CD8-positive, alpha-beta T cell (primary cell): ENCODE measurements at regions of chr7 and their contacts with region 1.

Region 1: DNA sequence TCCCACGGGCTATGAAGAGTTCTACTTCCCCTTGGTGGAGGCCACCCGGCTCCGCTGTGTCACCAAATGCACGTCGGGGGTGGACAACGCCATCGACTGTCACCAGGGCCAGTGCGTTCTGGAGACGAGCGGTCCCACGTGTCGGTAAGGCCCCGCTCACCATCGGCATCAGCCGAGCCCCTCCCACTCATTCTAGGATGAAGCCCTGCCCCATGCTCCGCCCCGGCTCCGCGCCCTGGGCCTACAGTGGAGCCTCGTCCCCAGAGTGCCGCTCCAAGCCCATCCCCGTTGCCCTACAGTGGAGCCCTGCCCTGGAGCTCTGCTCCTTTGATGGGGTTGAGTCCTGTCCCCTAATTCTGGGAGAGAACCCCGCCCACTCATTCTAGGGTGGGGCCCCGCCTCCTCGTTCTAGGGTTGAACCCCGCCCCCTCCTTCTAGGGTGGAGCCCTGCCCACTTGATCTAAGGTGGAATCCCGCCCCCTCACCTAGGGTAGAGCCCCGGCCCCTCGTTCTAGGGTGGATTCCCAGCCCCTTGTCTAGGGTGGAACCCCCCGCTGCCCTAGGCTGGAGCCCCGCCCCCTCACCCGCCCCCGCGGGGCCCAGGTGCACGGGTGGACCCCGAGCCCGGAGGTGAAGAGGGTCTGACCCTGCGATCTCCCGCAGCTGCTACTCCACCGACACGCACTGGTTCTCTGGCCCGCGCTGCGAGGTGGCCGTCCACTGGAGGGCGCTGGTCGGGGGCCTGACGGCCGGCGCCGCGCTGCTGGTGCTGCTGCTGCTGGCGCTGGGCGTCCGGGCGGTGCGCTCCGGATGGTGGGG is 3.4 kb upstream of the MUC12 start:
- DNase-seq: peak; percentile 57 to 84 (median 71)
- ATAC-seq: peak; percentile 84
- H3K4me3 ChIP-seq: peak overlapping the region; percentile 35 to 71
- H3K4me3 Mint-ChIP-seq: peak overlapping the region; percentile 81
- H3K27ac ChIP-seq: no peak overlapping the region
- H3K27ac Mint-ChIP-seq: no peak overlapping the region
- H3K4me1 ChIP-seq: peaks cover 21% of the 10 kb centered on the region
- H3K4me1 Mint-ChIP-seq: peaks cover 24% of the 10 kb centered on the region
- H3K27me3 ChIP-seq: peaks cover 36 to 40% of the 10 kb centered on the region in 2 experiments
- H3K27me3 Mint-ChIP-seq: peaks cover 60% of the 10 kb centered on the region
- CTCF ChIP-seq: peak; percentile 56

Region 2: GRCh38 chr7:101031082-101031481 is 65.2 kb after region 1 on chr7:
- CTCF ChIA-PET with region 1: no interaction called
- POLR2A ChIA-PET with region 1: no interaction called
- intact Hi-C with region 1: loop called in 1 of 2 experiments (anchors 1 kb)
- DNase-seq: no peak
- ATAC-seq: no peak
- H3K4me3 ChIP-seq: no peak overlapping the region
- H3K4me3 Mint-ChIP-seq: no peak overlapping the region
- H3K27ac ChIP-seq: no peak overlapping the region
- H3K27ac Mint-ChIP-seq: no peak overlapping the region
- H3K4me1 ChIP-seq: no peaks in the 10 kb centered on the region
- H3K4me1 Mint-ChIP-seq: no peaks in the 10 kb centered on the region
- H3K27me3 ChIP-seq: no peaks in the 10 kb centered on the region
- H3K27me3 Mint-ChIP-seq: peaks cover 3% of the 10 kb centered on the region
- CTCF ChIP-seq: no peak